IMR-90 (cell line): ENCODE measurements at regions of chr1 and their contacts with region 1.

Region 1: DNA sequence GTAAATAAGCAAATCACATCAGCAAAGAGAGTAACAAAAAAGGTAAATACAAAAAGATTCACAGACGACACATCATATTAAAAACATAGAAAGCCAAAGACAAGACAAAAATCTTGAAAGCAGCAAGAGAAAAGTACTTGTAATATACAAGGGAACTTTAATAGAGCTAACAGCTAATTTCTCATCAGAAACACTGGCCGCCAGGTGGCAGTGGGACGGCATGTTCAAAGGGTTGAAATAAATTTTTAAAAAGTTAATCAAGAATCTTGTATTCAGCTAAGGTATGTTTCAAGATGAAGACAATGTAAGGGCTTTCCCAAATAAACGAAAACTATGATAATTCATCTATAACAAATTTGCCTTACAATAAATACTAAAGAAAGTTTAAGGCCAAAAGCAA is 358.1 kb downstream of the LRRIQ3 start:
- DNase-seq: no peak
- ATAC-seq: no peak
- H3K4me3 ChIP-seq: no peak overlapping the region
- H3K27ac ChIP-seq: no peak overlapping the region
- H3K4me1 ChIP-seq: no peaks in the 10 kb centered on the region
- H3K27me3 ChIP-seq: no peaks in the 10 kb centered on the region
- CTCF ChIP-seq: peak; percentile 39
- POLR2A ChIP-seq: no peak
- RAD21 ChIP-seq: peak; percentile 49

Region 2: DNA sequence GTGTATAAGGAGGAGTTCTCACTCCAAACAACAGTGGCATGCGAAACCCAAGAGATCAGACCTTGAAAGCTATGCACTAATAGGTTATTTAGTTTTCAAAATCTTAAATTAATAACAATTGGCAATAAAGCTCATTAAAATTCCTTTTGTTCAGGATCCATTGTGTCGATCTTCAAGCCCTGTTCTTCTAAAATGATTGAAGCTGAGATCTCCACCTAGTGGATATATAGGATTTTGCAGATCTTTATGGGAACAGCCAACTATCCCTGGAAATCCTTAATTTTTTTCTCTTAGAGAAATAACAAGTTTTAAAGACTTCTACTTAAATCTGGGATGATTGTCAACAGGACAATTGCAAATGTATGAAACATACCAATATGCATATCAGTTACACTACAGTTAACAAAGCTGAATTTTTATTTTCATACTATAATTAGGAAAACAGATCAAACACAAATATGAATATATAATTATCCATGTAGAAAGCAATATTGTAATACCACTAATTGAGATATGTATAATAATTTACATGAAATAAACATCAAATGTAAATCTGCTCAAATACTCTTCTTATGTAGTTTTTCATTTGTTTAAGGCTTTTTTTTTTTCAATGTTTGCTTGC is 629.2 kb after region 1 on chr1:
- CTCF ChIA-PET with region 1: no interaction called
- POLR2A ChIA-PET with region 1: no interaction called
- dilution Hi-C with region 1: no loop called
- in situ Hi-C with region 1: no loop called
- intact Hi-C with region 1: loop called (anchors 2 kb)
- DNase-seq: peak; percentile 56
- ATAC-seq: peak; percentile 85
- H3K4me3 ChIP-seq: no peak overlapping the region
- H3K27ac ChIP-seq: no peak overlapping the region
- H3K4me1 ChIP-seq: peaks cover 6% of the 10 kb centered on the region; the same call in 1 of the 2 replicates
- H3K27me3 ChIP-seq: no peaks in the 10 kb centered on the region
- CTCF ChIP-seq: peak; percentile 71
- POLR2A ChIP-seq: peak; percentile 37; the same call in 1 of the 2 replicates
- RAD21 ChIP-seq: peak; percentile 80

Region 3: GRCh38 chr1:74504125-74504932 is 664.4 kb after region 1 on chr1:
- CTCF ChIA-PET with region 1: no interaction called
- POLR2A ChIA-PET with region 1: no interaction called
- dilution Hi-C with region 1: no loop called
- in situ Hi-C with region 1: no loop called
- intact Hi-C with region 1: loop called (anchors 1 kb)
- DNase-seq: peak; percentile 50
- ATAC-seq: peak; percentile 87
- H3K4me3 ChIP-seq: no peak overlapping the region
- H3K27ac ChIP-seq: no peak overlapping the region
- H3K4me1 ChIP-seq: no peaks in the 10 kb centered on the region
- H3K27me3 ChIP-seq: no peaks in the 10 kb centered on the region
- CTCF ChIP-seq: peak; percentile 87
- POLR2A ChIP-seq: no peak
- RAD21 ChIP-seq: peak; percentile 86

Region 4: GRCh38 chr1:74689621-74690363 is 849.9 kb after region 1 on chr1:
- CTCF ChIA-PET with region 1: interaction called, 3 read pairs
- POLR2A ChIA-PET with region 1: no interaction called
- dilution Hi-C with region 1: no loop called
- in situ Hi-C with region 1: no loop called
- intact Hi-C with region 1: loop called (anchors 1 kb)
- DNase-seq: peak; percentile 52
- ATAC-seq: peak; percentile 75; the same call in 1 of the 2 replicates
- H3K4me3 ChIP-seq: no peak overlapping the region
- H3K27ac ChIP-seq: no peak overlapping the region
- H3K4me1 ChIP-seq: no peaks in the 10 kb centered on the region
- H3K27me3 ChIP-seq: no peaks in the 10 kb centered on the region
- CTCF ChIP-seq: peak; percentile 82
- POLR2A ChIP-seq: no peak
- RAD21 ChIP-seq: peak; percentile 82